ENCODE measurements at regions of chr4 and their contacts with region 1.

Region 1: DNA sequence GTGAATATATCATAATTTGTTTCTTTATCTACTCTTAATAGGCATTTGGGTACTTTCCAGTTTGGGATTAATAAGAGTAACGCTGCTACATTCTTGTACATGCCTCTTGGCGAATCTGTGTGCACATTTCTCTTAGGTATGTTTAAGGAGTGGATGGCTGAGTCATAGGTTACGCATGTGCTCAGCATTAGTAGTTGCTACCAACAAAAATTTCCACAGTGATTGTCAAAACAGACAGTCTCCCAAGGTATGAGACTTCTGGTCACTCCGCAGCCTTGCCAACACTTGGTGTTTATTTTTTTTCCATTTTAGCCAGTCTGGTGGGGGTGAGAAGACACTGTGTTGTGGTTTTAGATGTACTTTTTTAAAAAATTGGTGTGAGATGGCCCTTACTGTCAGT is 44.6 kb downstream of the FGFBP1 start:
- DNase-seq: peak; percentile 90
- ATAC-seq: peak; percentile 88
- H3K4me3 ChIP-seq: peak overlapping the region in 1 of 2 experiments; percentile 18; a peak in 2 of 4 replicates
- H3K27ac ChIP-seq: peak overlapping the region; percentile 27; the same call in 1 of the 2 replicates
- H3K4me1 ChIP-seq: peaks cover 15 to 34% of the 10 kb centered on the region in 2 experiments
- H3K27me3 ChIP-seq: no peaks in the 10 kb centered on the region
- CTCF ChIP-seq: no peak
- POLR2A ChIP-seq: no peak
- RAD21 ChIP-seq: no peak

Region 2: GRCh38 chr4:15690020-15690809 is 203.7 kb before region 1 on chr4:
- CTCF ChIA-PET with region 1: no interaction called
- POLR2A ChIA-PET with region 1: no interaction called
- RAD21 ChIA-PET with region 1: no interaction called
- intact Hi-C with region 1: loop called (anchors 10 kb)
- DNase-seq: peak; percentile 57
- ATAC-seq: peak; percentile 79
- H3K4me3 ChIP-seq: peak overlapping the region in 1 of 2 experiments; percentile 23; a peak in 2 of 4 replicates
- H3K27ac ChIP-seq: peak overlapping the region; percentile 37; the same call in 1 of the 2 replicates
- H3K4me1 ChIP-seq: peaks cover 14 to 46% of the 10 kb centered on the region in 2 experiments
- H3K27me3 ChIP-seq: no peaks in the 10 kb centered on the region
- CTCF ChIP-seq: no peak
- POLR2A ChIP-seq: no peak
- RAD21 ChIP-seq: no peak

Region 3: DNA sequence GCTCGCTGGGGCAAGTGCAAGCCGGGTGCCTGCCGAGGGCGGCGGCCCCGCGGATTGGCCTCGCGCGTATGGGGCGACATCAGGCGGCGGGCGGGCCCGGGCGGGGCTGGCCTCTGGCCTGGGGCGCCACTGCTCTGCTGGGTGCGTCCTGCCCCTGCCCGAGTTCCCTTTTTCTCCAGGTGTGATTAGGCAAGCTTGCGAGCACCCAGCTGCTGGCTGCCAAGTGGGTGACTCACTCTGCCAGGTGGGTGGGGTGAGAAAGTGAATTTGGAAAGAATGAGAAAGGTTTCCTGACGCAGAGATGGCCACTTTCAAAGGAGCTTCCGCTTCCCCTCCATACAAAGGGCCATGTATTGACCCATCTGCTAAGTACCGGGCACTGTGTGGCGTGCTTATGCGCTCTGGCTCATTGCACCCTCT is 12.1 kb after region 1 on chr4:
- CTCF ChIA-PET with region 1: no interaction called
- POLR2A ChIA-PET with region 1: interaction called, 11 read pairs
- RAD21 ChIA-PET with region 1: no interaction called
- intact Hi-C with region 1: loop called (anchors 1 kb)
- DNase-seq: peak; percentile 95
- ATAC-seq: peak; percentile 95
- H3K4me3 ChIP-seq: peak overlapping the region; percentile 18 to 47
- H3K27ac ChIP-seq: peak overlapping the region; percentile 73
- H3K4me1 ChIP-seq: peaks cover 19 to 32% of the 10 kb centered on the region in 2 experiments
- H3K27me3 ChIP-seq: no peaks in the 10 kb centered on the region
- CTCF ChIP-seq: no peak
- POLR2A ChIP-seq: no peak
- RAD21 ChIP-seq: peak; percentile 43

Region 4: GRCh38 chr4:15938182-15938581 is 44.2 kb after region 1 on chr4:
- CTCF ChIA-PET with region 1: no interaction called
- POLR2A ChIA-PET with region 1: no interaction called
- RAD21 ChIA-PET with region 1: no interaction called
- intact Hi-C with region 1: loop called (anchors 5 kb)
- DNase-seq: peak; percentile 34
- ATAC-seq: peak; percentile 88
- H3K4me3 ChIP-seq: peak overlapping the region; percentile 18 to 45
- H3K27ac ChIP-seq: 0 out of 2 replicates have a peak overlapping the region, but pooled peaks have one; percentile 15
- H3K4me1 ChIP-seq: peaks cover 11 to 28% of the 10 kb centered on the region in 2 experiments
- H3K27me3 ChIP-seq: no peaks in the 10 kb centered on the region
- CTCF ChIP-seq: no peak
- POLR2A ChIP-seq: no peak
- RAD21 ChIP-seq: no peak